ENCODE measurements at regions of chr17 and their contacts with region 1.

Region 1: DNA sequence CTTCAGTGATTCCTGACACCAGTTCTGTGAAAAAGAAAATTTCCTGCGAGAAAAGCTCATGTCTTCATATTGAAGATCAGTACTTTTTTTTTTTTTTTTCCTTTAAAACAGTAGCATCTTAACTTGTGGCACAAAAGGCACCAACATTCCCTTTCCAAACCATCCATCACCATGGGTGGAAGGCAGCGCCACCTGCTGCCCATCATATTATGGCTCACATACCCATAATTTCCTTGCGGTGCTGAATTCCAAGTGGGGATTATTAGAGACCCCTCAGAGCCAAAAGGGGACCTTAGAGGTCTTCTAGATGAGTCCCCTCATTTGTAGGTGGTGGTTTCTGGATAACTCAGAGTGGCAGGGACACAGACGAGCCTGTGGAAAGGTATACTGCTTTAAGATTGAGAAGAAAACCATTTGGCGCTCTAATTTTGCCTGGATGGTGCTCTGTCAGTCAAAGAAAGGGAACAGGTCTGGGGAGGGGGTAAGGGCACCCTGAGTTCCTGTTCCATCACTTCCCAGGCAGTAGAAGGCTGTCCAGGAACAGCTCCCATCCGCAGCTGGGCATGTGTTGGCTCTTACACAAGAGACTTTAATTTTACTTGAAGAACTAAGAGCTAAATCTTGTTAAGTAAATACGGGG is 7.9 kb upstream of the SOST start:
- DNase-seq: peak; percentile 76 to 88
- ATAC-seq: peak; percentile 42 to 73; a peak in 4 of 6 replicates
- H3K4me3 ChIP-seq: no peak overlapping the region
- H3K27ac ChIP-seq: no peak overlapping the region
- H3K4me1 ChIP-seq: no peaks in the 10 kb centered on the region
- CTCF ChIP-seq: peak; percentile 96
- EP300 ChIP-seq: no peak
- POLR2A ChIP-seq: no peak
- RAD21 ChIP-seq: peak; percentile 35 to 64; a peak in 4 of 5 replicates

Region 2: DNA sequence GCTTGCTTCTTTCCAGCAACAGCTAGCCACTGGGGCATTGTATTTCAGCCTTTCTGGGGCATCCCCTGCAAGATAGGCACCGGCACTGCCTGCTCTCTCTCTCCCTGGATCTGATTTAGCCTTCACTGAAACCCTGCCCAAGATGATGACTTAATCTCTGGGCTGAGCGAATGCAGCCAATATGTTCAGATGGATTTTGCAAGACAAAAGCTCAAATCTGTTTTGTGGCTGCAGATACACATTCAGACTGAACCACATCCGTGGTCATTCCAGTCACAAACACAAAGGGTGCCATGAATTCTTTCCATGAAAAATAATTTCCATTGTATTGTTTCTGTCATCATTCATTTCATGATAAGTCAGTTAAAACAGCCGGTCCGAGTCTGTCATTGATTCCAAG is 32.2 kb before region 1 on chr17:
- CTCF ChIA-PET with region 1: interaction called, 288 read pairs
- POLR2A ChIA-PET with region 1: no interaction called
- DNase-seq: no peak
- ATAC-seq: no peak
- H3K4me3 ChIP-seq: no peak overlapping the region
- H3K27ac ChIP-seq: peak overlapping the region in 1 of 2 experiments; percentile 52; a peak in 1 of 6 replicates
- H3K4me1 ChIP-seq: no peaks in the 10 kb centered on the region
- CTCF ChIP-seq: no peak
- EP300 ChIP-seq: no peak
- POLR2A ChIP-seq: no peak
- RAD21 ChIP-seq: no peak

Region 3: DNA sequence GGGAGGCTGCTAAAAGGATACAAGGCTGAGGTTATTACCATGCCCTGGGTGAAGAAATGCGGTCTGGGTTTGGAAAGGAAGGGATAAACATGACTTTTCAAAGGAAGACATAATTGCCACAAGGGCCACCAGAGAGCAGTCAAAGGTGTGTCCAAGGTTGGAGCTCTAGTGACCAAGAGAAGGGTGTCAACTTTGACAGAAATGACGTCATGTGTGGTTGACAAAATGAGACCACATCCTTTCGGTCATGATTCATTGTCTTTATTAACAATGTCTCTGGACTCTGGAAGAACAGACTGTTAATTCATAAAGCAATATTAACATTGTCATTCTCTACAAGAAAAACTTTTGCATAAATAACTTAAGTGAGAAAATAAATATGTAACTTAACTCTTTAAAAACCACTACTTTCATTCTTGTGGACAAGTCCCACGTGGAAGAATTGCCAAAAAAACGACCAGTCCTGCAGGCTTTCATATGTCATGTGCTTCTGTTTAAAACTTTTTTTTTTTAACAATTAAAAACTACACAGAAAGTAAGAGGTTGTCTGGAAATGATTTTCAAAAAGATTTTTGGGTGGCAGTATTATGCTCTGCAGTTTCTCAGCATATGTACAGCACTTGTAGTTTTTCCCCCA is 12.9 kb before region 1 on chr17:
- CTCF ChIA-PET with region 1: interaction called, 288 read pairs
- POLR2A ChIA-PET with region 1: no interaction called
- DNase-seq: no peak
- ATAC-seq: no peak
- H3K4me3 ChIP-seq: no peak overlapping the region
- H3K27ac ChIP-seq: no peak overlapping the region
- H3K4me1 ChIP-seq: peaks cover 9% of the 10 kb centered on the region; the same call in 1 of the 3 replicates
- CTCF ChIP-seq: no peak
- EP300 ChIP-seq: no peak
- POLR2A ChIP-seq: no peak
- RAD21 ChIP-seq: no peak

Region 4: DNA sequence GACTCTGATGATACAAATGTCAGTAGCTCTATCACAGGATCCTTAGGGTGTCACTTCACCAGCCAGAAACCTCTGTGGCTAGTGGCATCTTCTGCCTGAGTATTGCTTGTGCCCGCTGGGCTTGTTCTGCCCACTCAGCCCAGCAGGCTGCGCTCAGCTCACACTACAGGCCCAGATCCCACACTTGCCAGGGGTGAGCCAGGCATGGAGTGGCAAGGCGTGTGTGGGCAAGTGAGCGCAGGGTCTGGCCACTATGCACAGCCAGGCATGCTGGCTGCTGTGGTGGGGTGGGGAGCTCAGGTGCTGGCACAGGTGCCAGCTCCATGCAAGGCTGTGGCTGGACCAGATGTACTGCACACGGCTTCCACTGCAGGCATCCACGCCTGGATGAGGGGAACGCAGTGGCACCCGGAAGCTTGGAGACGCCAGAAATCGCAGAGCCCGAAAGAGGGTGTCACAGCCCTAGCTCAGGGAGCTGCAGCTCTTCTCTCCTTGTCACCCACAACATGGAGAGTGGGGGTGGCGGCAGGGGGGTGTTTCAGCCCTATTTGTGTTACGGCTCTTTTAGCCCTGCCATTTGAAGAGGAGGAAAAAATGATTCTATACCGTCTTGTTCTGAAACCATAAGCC is 23.9 kb after region 1 on chr17:
- CTCF ChIA-PET with region 1: interaction called, 13 read pairs
- POLR2A ChIA-PET with region 1: no interaction called
- DNase-seq: no peak
- ATAC-seq: peak in 1 of 2 experiments; percentile 67; a peak in 3 of 6 replicates
- H3K4me3 ChIP-seq: no peak overlapping the region
- H3K27ac ChIP-seq: no peak overlapping the region
- H3K4me1 ChIP-seq: no peaks in the 10 kb centered on the region
- CTCF ChIP-seq: no peak
- EP300 ChIP-seq: no peak
- POLR2A ChIP-seq: no peak
- RAD21 ChIP-seq: peak in 1 of 2 experiments; percentile 37; a peak in 1 of 5 replicates

Region 5: GRCh38 chr17:43854453-43854852 is 87.9 kb after region 1 on chr17:
- CTCF ChIA-PET with region 1: interaction called, 10 read pairs
- POLR2A ChIA-PET with region 1: no interaction called
- DNase-seq: no peak
- ATAC-seq: no peak
- H3K4me3 ChIP-seq: no peak overlapping the region
- H3K27ac ChIP-seq: no peak overlapping the region
- H3K4me1 ChIP-seq: no peaks in the 10 kb centered on the region
- CTCF ChIP-seq: no peak
- EP300 ChIP-seq: no peak
- POLR2A ChIP-seq: no peak
- RAD21 ChIP-seq: no peak